ENCODE measurements at regions of chr12 and their contacts with region 1.

Region 1: GRCh38 chr12:75511116-75512048 is at the start of gene KRR1:
- DNase-seq: peak; percentile 95
- ATAC-seq: peak; percentile 97
- H3K4me3 ChIP-seq: peak within 1 kb of the TSS; percentile 61 to 100 (median 93)
- H3K4me3 Mint-ChIP-seq: peak within 1 kb of the TSS; percentile 93
- H3K27ac ChIP-seq: peak within 1 kb of the TSS; percentile 72 to 83
- H3K27ac Mint-ChIP-seq: peak within 1 kb of the TSS; percentile 95
- H3K4me1 ChIP-seq: peaks cover 11 to 18% of the 10 kb centered on the region in 2 donors
- H3K4me1 Mint-ChIP-seq: peaks cover 28% of the 10 kb centered on the region
- H3K27me3 ChIP-seq: no peaks in the 10 kb centered on the region
- H3K27me3 Mint-ChIP-seq: no peaks in the 10 kb centered on the region
- CTCF ChIP-seq: no peak
- total RNA-seq, gene KRR1: 80.2 and 87.7 TPM in 2 replicates

Region 2: GRCh38 chr12:74537707-74538385 is 973.5 kb before region 1 on chr12 and contains the start of gene ATXN7L3B:
- CTCF ChIA-PET with region 1: no interaction called
- POLR2A ChIA-PET with region 1: no interaction called
- intact Hi-C with region 1: loop called (anchors 10 kb)
- DNase-seq: peak; percentile 97
- ATAC-seq: peak; percentile 97
- H3K4me3 ChIP-seq: peak within 1 kb of the TSS; percentile 71 to 97 (median 96)
- H3K4me3 Mint-ChIP-seq: peak within 1 kb of the TSS; percentile 98
- H3K27ac ChIP-seq: peak within 1 kb of the TSS; percentile 92 to 94
- H3K27ac Mint-ChIP-seq: peak within 1 kb of the TSS; percentile 98
- H3K4me1 ChIP-seq: peaks cover 41 to 44% of the 10 kb centered on the region in 2 donors
- H3K4me1 Mint-ChIP-seq: peaks cover 56% of the 10 kb centered on the region
- H3K27me3 ChIP-seq: no peaks in the 10 kb centered on the region
- H3K27me3 Mint-ChIP-seq: no peaks in the 10 kb centered on the region
- CTCF ChIP-seq: no peak
- total RNA-seq, gene ATXN7L3B: 35.3 and 38.6 TPM in 2 replicates

Region 3: DNA sequence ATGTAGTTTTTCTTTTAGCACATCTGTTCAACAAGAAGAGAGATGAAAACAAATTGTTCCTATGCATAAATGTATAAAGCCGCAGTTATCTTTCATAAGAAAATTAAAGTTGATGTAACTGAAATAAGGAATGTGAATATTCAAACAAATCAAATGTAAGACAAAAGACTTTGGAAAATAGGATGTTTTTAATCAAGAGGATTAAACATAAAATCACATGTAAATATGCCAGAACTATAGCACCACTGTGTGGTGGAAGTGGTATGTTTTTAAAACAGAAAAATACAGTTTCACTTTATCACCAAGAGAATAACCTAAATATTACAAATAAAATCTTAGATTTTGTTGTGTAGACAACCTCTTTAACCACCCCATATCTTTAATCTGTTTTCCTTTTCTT is 221.6 kb before region 1 on chr12:
- CTCF ChIA-PET with region 1: no interaction called
- POLR2A ChIA-PET with region 1: no interaction called
- intact Hi-C with region 1: no loop called
- DNase-seq: no peak
- ATAC-seq: no peak
- H3K4me3 ChIP-seq: no peak overlapping the region
- H3K4me3 Mint-ChIP-seq: no peak overlapping the region
- H3K27ac ChIP-seq: no peak overlapping the region
- H3K27ac Mint-ChIP-seq: no peak overlapping the region
- H3K4me1 ChIP-seq: no peaks in the 10 kb centered on the region
- H3K4me1 Mint-ChIP-seq: no peaks in the 10 kb centered on the region
- H3K27me3 ChIP-seq: no peaks in the 10 kb centered on the region
- H3K27me3 Mint-ChIP-seq: no peaks in the 10 kb centered on the region
- CTCF ChIP-seq: no peak

Region 4: DNA sequence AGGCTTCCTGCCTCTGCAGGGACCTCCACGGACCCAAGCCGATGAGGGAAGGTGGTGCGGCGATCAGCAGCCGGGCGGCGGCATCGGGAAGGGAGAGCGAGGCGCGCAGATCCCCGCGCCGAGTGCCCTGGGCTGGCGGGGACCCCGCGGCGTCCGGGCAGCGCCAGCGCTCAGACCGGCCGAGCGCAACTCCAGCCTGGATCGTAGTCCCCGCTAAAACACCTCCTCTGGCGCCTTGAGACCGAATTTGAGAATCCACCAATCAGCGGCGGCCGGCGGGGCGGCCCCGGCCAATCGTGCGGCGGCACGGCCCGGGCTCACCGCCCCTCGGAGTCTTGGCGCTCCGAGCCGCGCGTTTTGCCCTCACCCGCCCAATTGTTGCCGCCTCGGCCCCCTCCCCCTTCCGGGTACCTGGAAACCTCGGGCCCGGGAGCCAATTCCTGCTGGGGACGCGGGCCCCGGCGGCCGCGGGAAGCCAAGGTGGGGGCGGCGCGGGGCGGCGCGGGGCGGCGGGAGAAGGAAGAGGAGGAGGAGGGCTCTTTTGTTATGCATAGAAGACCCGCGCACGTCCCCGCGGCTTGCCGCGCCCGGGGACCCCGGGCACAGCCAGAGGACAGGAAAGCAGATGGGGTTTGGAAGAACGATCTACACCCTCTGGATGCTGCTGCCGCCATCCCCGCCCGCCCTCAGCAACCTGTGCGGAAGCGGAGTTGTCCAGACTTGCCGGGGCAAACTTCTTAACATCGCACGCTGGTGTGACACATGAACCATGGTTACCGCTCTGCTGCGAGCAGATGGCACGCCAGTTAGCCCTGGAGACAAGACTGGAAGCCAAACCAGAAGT is 1554.2 kb after region 1 on chr12 and contains the start of gene E2F7:
- CTCF ChIA-PET with region 1: no interaction called
- POLR2A ChIA-PET with region 1: no interaction called
- intact Hi-C with region 1: loop called (anchors 10 kb)
- DNase-seq: peak; percentile 86
- ATAC-seq: peak; percentile 89
- H3K4me3 ChIP-seq: peak within 1 kb of the TSS; percentile 47 to 79 (median 63)
- H3K4me3 Mint-ChIP-seq: peak within 1 kb of the TSS; percentile 90
- H3K27ac ChIP-seq: no peak within 1 kb of the TSS
- H3K27ac Mint-ChIP-seq: peak within 1 kb of the TSS; percentile 48
- H3K4me1 ChIP-seq: peaks cover 22 to 31% of the 10 kb centered on the region in 2 donors
- H3K4me1 Mint-ChIP-seq: peaks cover 35% of the 10 kb centered on the region
- H3K27me3 ChIP-seq: peaks cover 0 to 22% (median 13%) of the 10 kb centered on the region in 4 experiments
- H3K27me3 Mint-ChIP-seq: peaks cover 10% of the 10 kb centered on the region
- CTCF ChIP-seq: no peak
- total RNA-seq, gene E2F7: 0.29 and 0.42 TPM in 2 replicates